Lower lobe of right lung (tissue), 2 donors: ENCODE measurements at regions of chr2 and their contacts with region 1.

Region 1: DNA sequence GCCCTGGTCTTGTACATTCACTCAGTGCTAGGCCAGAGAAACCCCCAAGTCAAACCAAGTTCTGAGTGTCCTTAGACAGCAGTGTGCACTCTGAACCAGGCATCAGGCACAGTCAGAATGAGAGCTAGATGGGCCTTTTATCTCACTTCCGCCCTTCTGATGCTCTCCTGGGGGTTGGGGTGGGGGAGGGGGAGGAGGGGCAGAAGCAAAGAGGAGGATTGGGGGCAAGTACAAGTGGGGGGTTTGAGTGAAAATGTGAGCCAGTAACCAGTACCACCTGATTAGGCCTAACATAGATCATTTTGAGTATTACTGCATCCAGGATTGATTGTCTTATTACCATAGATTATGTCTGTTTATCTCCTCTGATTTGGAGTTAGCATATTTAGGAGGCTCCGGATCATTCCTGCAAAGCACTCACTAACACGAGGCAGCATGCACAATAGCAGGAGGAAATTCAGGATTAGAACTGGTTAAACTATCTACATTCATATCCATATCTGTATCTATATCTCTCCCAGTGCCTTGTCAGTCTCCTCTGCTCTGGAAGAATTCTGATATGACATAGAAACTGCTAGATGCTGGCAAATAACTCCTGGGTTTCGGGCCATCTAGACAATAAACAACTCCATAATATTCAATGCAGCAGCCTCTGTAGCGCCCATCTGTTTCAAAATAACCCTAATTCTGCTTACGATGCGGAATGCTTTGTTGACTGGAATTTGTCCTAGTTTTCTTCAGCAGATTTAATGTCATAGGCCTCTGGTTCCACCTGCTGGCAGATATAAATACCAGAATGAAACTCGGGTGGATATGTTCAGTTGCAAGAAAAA is 149.1 kb downstream of the RHBDD1 start:
- DNase-seq: no peak
- ATAC-seq: peak; percentile 40 to 63
- H3K4me3 ChIP-seq: no peak overlapping the region
- H3K27ac ChIP-seq: peak overlapping the region; percentile 56
- H3K4me1 ChIP-seq: no peaks in the 10 kb centered on the region
- H3K27me3 ChIP-seq: no peaks in the 10 kb centered on the region
- CTCF ChIP-seq: peak; percentile 64

Region 2: DNA sequence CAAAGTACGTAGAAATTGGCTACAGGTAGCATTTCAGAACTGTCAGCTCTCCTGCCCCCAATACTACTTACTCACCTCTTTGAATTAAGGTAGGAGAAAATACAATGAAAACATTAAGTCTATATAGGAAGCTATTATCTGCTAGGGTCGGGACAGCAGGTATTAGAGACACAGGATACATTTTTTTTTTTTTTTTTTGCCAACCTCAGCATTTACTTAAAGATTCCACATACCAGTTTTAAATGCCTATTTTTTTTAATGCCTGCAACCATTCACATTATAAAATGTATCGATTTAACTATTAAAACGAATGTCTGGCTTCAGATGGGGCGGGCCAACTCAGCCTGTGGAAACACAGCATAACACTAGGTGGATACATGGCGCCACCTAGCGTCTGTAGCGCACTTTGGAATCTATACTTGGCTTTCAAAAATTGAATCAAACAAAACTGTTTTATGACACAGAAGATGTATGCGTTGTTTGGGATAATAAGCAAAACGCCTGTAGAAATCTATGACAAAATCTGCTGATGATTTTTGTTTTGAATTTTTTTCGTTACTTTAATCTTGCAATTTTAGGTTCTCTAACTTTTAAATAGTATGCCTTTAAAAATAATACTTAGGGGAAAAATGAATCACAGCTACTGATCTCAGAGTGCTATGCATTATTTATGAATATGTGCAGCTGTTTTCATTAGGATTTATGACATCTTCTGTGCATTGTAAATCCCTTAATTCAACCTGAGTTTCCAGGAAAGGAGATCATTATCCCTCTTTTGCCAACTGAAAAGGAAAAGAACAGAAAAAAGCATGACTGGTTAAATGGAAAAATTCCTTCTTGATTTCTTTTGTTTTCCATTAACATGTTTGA is 1324.5 kb before region 1 on chr2:
- intact Hi-C with region 1: loop called (anchors 10 kb)
- DNase-seq: peak; percentile 76
- ATAC-seq: peak; percentile 80 to 89
- H3K4me3 ChIP-seq: no peak overlapping the region
- H3K27ac ChIP-seq: no peak overlapping the region
- H3K4me1 ChIP-seq: peaks cover 3% of the 10 kb centered on the region
- H3K27me3 ChIP-seq: no peaks in the 10 kb centered on the region
- CTCF ChIP-seq: peak; percentile 79